Body of pancreas (tissue), 4 donors: ENCODE measurements at regions of chr17 and their contacts with region 1.

Region 1: GRCh38 chr17:38681096-38681495 is 6.3 kb upstream of the EPOP start:
- DNase-seq: no peak
- ATAC-seq: no peak
- H3K4me3 ChIP-seq: no peak overlapping the region
- H3K27ac ChIP-seq: no peak overlapping the region
- H3K4me1 ChIP-seq: peaks cover 3% of the 10 kb centered on the region
- H3K27me3 ChIP-seq: no peaks in the 10 kb centered on the region
- CTCF ChIP-seq: no peak
- POLR2A ChIP-seq: no peak

Region 2: GRCh38 chr17:38735161-38735997 is 54.3 kb after region 1 on chr17:
- intact Hi-C with region 1: loop called (anchors 5 kb)
- DNase-seq: peak; percentile 54 to 74 (median 70)
- ATAC-seq: no peak
- H3K4me3 ChIP-seq: no peak overlapping the region
- H3K27ac ChIP-seq: peak overlapping the region in 3 of 4 donors; percentile 54 to 96 (median 93)
- H3K4me1 ChIP-seq: peaks cover 55% of the 10 kb centered on the region
- H3K27me3 ChIP-seq: no peaks in the 10 kb centered on the region
- CTCF ChIP-seq: peak; percentile 77 to 97 (median 90)
- POLR2A ChIP-seq: peak in 1 of 3 donors; percentile 23